Dorsolateral prefrontal cortex (tissue), 120 donors: ENCODE measurements at regions of chr19 and their contacts with region 1.

Region 1: GRCh38 chr19:796692-797527 is at the start of gene PTBP1:
- DNase-seq: peak; percentile 99 to 100 (median 100)
- H3K4me3 ChIP-seq: peak within 1 kb of the TSS; percentile 59 to 99 (median 87)
- H3K27ac ChIP-seq: peak within 1 kb of the TSS; percentile 70 to 100 (median 95)
- H3K27me3 ChIP-seq: no peaks in the 10 kb centered on the region
- CTCF ChIP-seq: peak in 41 of 56 donors; percentile 6 to 66 (median 35)
- total RNA-seq, gene PTBP1: 40.5 to 125 (median 72.0) TPM

Region 2: DNA sequence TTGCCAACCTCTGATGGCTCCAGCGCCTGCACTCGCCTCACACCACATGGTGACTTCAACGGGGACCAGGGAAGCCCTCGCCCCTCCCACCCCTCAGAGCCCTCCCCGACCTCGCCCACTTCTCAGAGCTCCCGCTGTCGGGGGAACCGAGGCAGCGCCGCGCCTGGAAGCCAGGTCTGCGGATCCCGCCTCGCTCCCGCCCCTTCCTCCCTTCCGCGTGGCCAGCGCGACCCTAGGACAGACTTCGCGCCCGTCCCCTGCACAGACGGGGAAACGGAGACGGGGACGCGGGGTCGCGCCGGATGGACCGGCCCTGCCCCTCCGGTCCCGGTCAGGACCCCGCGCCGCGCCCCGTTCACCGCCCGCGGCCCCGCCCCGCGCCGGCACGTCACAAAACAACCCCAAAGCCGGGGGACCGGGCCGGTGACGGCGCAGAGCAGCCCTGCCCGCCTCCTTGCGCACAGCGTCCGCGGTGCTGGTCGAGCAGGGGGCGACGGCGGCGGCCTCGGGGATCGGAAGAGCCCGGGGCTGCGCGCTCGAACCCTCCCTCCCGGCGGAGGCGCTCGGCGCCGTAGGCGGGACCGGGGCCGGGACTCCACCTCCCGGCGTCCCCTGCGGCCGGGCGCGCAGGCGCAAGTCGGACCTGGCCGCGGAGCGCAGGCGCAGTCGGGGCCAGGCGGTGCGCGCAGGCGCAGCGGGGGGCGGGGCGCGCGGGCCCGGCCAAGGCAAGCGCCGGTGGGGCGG is 265.7 kb before region 1 on chr19:
- intact Hi-C with region 1: loop called in 1 of 2 experiments (anchors 5 kb)
- DNase-seq: peak in 8 of 10 donors; percentile 46 to 91 (median 60)
- H3K4me3 ChIP-seq: peak overlapping the region; percentile 63 to 99 (median 92)
- H3K27ac ChIP-seq: peak overlapping the region; percentile 71 to 99 (median 94)
- H3K27me3 ChIP-seq: no peaks in the 10 kb centered on the region
- CTCF ChIP-seq: peak in 9 of 56 donors; percentile 8 to 41 (median 18)

Region 3: DNA sequence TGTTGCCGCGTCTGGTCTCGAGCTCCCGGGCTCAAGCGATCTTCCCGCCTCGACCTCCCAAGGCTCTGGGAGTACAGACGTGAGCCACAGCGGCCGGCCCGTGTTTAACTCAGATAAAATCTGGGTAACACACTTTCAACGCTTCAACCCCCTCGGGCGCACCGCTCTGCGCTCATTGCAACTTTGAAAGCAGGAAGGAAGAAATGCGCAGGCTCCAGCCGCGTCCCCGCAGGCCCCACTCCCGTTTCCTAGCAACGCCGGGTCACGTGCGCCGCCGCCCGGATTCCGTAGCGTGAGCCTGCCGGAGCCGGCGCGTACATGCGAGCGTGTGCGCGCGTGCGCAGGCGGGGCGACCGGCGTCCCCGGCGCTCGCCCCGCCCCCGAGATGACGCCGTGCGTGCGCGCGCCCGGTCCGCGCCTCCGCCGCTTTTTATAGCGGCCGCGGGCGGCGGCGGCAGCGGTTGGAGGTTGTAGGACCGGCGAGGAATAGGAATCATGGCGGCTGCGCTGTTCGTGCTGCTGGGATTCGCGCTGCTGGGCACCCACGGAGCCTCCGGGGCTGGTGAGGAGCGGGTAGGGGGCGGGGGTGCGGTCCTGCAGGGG is 224.7 kb before region 1 on chr19 and contains the start of gene BSG:
- intact Hi-C with region 1: loop called in 1 of 2 experiments (anchors 5 kb)
- DNase-seq: peak; percentile 94 to 99 (median 97)
- H3K4me3 ChIP-seq: peak within 1 kb of the TSS; percentile 69 to 100 (median 97)
- H3K27ac ChIP-seq: peak within 1 kb of the TSS; percentile 28 to 98 (median 91)
- H3K27me3 ChIP-seq: peaks cover 0 to 4% (median 0%) of the 10 kb centered on the region in 45 donors
- CTCF ChIP-seq: peak in 17 of 56 donors; percentile 2 to 38 (median 21)
- total RNA-seq, gene BSG: 350 to 867 (median 549) TPM

Region 4: DNA sequence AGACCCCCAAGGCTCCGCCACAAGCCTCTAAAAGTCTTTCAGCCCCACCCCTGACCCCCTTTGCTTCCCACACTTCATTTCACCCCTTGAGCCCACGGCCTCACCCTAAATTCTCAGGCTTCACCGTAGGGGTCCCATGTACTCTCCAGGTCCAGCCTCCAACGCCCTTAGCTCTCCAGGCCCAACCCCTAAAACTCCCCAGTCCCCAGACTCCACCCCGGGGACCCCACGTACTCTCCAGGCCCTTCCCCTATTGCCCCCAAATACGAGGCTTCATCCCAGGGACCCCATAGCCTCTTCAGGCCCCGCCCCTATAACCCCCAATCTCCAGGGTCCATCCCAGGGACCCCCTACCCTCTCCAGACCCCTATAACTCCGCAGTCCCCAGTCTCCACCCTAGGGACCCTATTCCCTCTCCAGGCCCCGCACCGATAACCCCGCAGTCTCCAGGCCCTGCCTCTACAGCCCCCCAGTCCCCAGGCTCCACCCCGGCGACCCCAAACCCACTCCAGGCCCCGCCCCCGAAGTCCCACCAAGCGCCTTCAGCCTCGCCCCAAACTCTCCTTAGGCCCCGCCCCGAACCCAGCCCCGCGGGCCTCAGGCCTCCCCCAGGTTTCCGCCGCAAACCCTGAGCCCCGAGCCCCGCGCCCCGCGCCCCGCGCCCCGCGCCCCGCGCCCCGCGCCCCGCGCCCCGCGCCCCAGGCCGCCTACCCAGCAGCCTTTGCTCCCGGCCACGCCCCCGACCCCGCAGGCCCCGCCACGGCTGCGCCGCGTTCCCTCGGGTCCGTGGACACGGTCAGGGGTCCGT is 95.5 kb after region 1 on chr19:
- intact Hi-C with region 1: loop called in 1 of 2 experiments (anchors 1 kb)
- DNase-seq: no peak
- H3K4me3 ChIP-seq: peak overlapping the region; percentile 59 to 98 (median 83)
- H3K27ac ChIP-seq: peak overlapping the region; percentile 73 to 100 (median 97)
- H3K27me3 ChIP-seq: no peaks in the 10 kb centered on the region
- CTCF ChIP-seq: peak in 1 of 56 donors; percentile 5

Region 5: DNA sequence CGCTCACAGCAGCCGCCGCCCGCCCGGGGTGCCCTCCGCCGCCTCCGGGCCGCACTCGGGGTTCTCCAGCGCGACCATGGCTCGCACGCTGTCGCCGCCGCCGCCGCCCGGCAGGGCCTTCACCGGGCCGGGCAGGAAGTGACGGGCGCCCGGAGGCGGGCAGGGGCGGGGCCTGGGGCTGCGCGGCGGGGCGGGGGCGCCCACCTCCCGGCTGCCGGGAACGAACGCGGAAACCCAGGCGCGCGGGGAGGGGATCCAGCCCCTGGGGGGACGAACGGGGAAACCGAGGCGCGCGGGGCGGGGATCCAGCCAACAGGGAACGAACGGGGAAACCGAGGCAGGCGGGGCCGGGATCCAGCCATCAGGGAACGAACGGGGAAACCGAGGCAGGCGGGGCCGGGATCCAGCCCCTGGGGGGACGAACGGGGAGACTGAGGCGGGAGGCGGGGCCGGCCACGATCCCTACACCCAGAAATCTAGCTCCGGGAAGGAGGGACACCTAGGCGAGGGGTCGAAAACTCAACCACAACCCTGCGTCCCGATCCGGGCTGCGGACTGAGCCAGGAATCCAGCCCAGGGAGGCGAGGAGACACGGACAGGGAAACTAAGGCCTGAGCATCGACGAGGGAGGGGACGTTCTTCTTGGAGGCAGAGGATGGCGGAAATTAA is 116.3 kb after region 1 on chr19 and contains the start of gene R3HDM4:
- intact Hi-C with region 1: loop called in 1 of 2 experiments (anchors 10 kb)
- DNase-seq: peak; percentile 48 to 88 (median 74)
- H3K4me3 ChIP-seq: peak within 1 kb of the TSS; percentile 55 to 95 (median 85)
- H3K27ac ChIP-seq: peak within 1 kb of the TSS in 57 of 59 donors; percentile 34 to 94 (median 82)
- H3K27me3 ChIP-seq: peaks cover 0 to 18% (median 12%) of the 10 kb centered on the region in 45 donors
- CTCF ChIP-seq: no peak
- total RNA-seq, gene R3HDM4: 26.1 to 60.5 (median 37.5) TPM